ENCODE measurements at regions of chr4 and their contacts with region 1.

Region 1: DNA sequence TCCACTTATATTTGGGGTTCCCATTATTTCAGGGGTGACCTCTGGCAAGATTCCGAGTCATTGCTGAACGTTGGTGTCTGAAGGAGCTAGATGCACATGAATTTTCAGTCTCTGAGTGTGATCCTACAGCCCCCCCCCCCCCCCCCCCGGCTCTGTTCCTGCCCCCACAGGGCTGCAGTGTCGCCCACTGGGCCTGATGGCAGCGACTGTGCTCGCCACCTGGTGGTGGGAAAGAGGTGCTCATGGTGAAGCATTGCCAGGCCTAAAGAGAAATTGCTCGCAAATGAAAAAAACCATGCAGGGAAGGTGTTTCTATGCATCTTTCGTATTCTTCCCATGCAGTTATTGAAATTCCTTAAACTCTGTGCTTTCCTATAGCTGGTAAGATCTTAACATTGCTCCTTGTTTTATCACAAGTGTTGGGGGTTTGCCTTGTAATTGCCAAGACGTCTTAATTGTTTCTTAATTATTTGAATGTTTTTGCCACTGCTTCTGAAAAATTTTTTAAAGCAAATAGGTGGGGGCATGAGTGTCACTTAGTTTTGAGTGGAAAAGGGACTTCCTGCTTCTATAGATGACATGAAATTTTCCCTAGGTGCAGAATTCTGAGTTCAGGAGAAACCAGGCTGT is 63.2 kb downstream of the CLDN22 start:
- DNase-seq: no peak
- H3K4me3 ChIP-seq: no peak overlapping the region
- CTCF ChIP-seq: peak; percentile 81

Region 2: DNA sequence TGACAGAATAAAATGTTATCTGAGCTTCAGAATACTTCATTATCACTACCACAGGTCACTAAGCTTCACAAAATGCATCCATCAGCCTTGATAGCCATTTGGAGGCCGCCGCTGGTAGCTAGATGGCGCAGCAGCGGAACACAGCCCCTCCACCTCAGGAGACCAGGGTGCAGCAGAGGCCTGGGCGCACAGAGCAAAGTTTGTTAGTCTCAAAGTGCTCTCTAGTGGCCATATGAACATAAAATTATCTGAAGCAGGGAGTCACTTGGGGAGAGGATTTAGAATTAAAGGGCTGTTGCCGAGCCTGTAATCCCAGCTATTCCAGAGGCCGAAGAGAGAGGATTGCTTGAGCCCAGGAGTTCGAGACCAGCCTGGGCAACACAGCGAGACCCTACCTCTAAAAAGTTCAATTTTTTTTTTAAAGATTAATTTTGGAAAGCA is 331.6 kb before region 1 on chr4:
- CTCF ChIA-PET with region 1: interaction called, 110 read pairs
- POLR2A ChIA-PET with region 1: no interaction called
- DNase-seq: no peak
- H3K4me3 ChIP-seq: no peak overlapping the region
- CTCF ChIP-seq: peak; percentile 47

Region 3: GRCh38 chr4:183098723-183099536 is 157.9 kb before region 1 on chr4 and contains the start of gene WWC2:
- CTCF ChIA-PET with region 1: interaction called, 50 read pairs
- POLR2A ChIA-PET with region 1: no interaction called
- DNase-seq: peak; percentile 41
- H3K4me3 ChIP-seq: peak within 1 kb of the TSS; percentile 94
- CTCF ChIP-seq: peak; percentile 7

Region 4: DNA sequence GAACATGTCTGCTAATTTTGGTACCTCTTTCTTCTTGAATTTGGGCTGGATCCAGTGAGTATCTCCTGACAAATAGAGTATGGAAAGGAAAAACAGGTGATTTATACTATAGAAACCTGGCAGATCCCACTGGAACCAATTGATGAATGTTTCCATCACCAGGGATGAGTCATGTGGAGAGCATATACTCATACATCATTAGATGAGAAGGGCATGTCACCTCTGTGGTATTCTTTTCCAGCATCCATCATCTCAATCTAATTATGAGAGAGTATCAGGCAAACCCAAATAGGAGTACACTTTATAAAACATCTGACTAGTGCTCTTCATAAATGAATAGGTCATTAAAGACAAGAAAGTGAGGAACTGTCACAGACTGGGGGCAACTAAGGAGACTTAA is 27.5 kb before region 1 on chr4:
- CTCF ChIA-PET with region 1: interaction called, 14 read pairs
- POLR2A ChIA-PET with region 1: no interaction called
- DNase-seq: no peak
- H3K4me3 ChIP-seq: no peak overlapping the region
- CTCF ChIP-seq: no peak

Region 5: GRCh38 chr4:183241322-183241640 is 15.6 kb before region 1 on chr4:
- CTCF ChIA-PET with region 1: interaction called, 51 read pairs
- POLR2A ChIA-PET with region 1: no interaction called
- DNase-seq: peak; percentile 26
- H3K4me3 ChIP-seq: no peak overlapping the region
- CTCF ChIP-seq: no peak

Region 6: GRCh38 chr4:183287309-183287659 is 30.4 kb after region 1 on chr4:
- CTCF ChIA-PET with region 1: interaction called, 26 read pairs
- POLR2A ChIA-PET with region 1: no interaction called
- DNase-seq: no peak
- H3K4me3 ChIP-seq: no peak overlapping the region
- CTCF ChIP-seq: no peak

Region 7: GRCh38 chr4:183388777-183389176 is 131.9 kb after region 1 on chr4:
- CTCF ChIA-PET with region 1: no interaction called
- POLR2A ChIA-PET with region 1: no interaction called
- DNase-seq: no peak
- H3K4me3 ChIP-seq: no peak overlapping the region
- CTCF ChIP-seq: no peak